ENCODE measurements at regions of chr17 and their contacts with region 1.

Region 1: GRCh38 chr17:74379495-74380085 is 12.3 kb downstream of the GPR142 start:
- DNase-seq: no peak
- ATAC-seq: peak; percentile 92
- H3K4me3 ChIP-seq: peak overlapping the region in 1 of 2 experiments; percentile 16; a peak in 1 of 4 replicates
- H3K27ac ChIP-seq: no peak overlapping the region; the same call in 1 of the 2 replicates
- H3K4me1 ChIP-seq: peaks cover 10% of the 10 kb centered on the region
- H3K27me3 ChIP-seq: peaks cover 3% of the 10 kb centered on the region
- CTCF ChIP-seq: peak; percentile 97

Region 2: GRCh38 chr17:74442670-74443515 is 63.3 kb after region 1 on chr17:
- CTCF ChIA-PET with region 1: interaction called, 11 read pairs
- POLR2A ChIA-PET with region 1: no interaction called
- in situ Hi-C with region 1: no loop called
- intact Hi-C with region 1: no loop called
- DNase-seq: no peak
- ATAC-seq: peak; percentile 69
- H3K4me3 ChIP-seq: peak overlapping the region in 1 of 2 experiments; percentile 45; a peak in 2 of 4 replicates
- H3K27ac ChIP-seq: no peak overlapping the region
- H3K4me1 ChIP-seq: peaks cover 22% of the 10 kb centered on the region
- H3K27me3 ChIP-seq: no peaks in the 10 kb centered on the region
- CTCF ChIP-seq: no peak

Measured in Panc1 (cell line).